Mammary epithelial cell (primary cell): ENCODE measurements at regions of chr4 and their contacts with region 1.

Region 1: DNA sequence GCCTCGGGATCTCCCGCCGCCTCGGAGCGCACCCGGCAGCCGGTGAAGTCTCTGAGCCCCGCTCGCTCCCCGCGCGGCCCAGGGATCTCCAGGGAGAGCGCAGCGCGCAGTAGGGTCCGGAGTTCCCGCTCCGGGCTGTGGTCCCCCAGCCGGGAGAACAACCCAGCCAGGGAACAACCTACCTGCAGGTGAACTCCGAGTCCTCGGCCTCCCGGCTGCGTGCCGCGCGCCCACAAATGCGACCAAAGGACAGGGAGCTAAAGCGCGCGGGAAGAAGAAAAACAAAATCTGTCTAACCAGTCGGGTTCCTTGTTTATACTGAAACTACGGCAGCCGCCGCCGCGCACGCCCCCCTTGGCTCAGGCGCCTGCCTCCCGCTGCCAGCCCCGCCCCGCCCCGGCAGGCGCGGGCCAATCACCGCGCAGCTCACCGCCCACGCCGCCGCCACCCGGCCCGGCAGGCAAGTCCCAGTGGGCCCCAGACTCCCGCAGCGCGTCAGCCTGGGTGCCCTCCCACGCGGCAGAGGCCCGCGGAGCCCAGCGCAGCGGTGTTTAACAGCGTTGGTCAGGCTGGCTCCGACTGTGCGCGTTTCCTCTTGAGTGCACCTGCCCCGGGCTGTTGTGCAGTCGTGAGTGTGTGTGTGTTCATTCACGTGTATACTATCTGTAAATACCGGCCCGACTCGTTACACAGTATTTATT is at the start of gene RASGEF1B:
- DNase-seq: peak; percentile 88
- H3K4me3 ChIP-seq: peak within 1 kb of the TSS; percentile 61 to 85 (median 68)
- H3K27ac ChIP-seq: peak within 1 kb of the TSS; percentile 30
- H3K4me1 ChIP-seq: peaks cover 23% of the 10 kb centered on the region
- H3K27me3 ChIP-seq: no peaks in the 10 kb centered on the region
- CTCF ChIP-seq: peak in 1 of 2 donors; percentile 1
- total RNA-seq, gene RASGEF1B: 10.6 to 15.3 TPM

Region 2: GRCh38 chr4:81180916-81181315 is 290.8 kb before region 1 on chr4:
- CTCF ChIA-PET with region 1: no interaction called
- dilution Hi-C with region 1: no loop called
- in situ Hi-C with region 1: no loop called
- intact Hi-C with region 1: no loop called
- DNase-seq: peak; percentile 61
- H3K4me3 ChIP-seq: no peak overlapping the region
- H3K27ac ChIP-seq: no peak overlapping the region
- H3K4me1 ChIP-seq: no peaks in the 10 kb centered on the region
- H3K27me3 ChIP-seq: no peaks in the 10 kb centered on the region
- CTCF ChIP-seq: no peak

Region 3: GRCh38 chr4:81447566-81448229 is 24.0 kb before region 1 on chr4:
- CTCF ChIA-PET with region 1: no interaction called
- dilution Hi-C with region 1: no loop called
- in situ Hi-C with region 1: no loop called
- intact Hi-C with region 1: no loop called
- DNase-seq: no peak
- H3K4me3 ChIP-seq: no peak overlapping the region
- H3K27ac ChIP-seq: no peak overlapping the region
- H3K4me1 ChIP-seq: peaks cover 6% of the 10 kb centered on the region
- H3K27me3 ChIP-seq: no peaks in the 10 kb centered on the region
- CTCF ChIP-seq: no peak

Region 4: GRCh38 chr4:81688085-81688484 is 216.3 kb after region 1 on chr4:
- CTCF ChIA-PET with region 1: interaction called, 7 read pairs
- dilution Hi-C with region 1: no loop called
- in situ Hi-C with region 1: no loop called
- intact Hi-C with region 1: loop called (anchors 1 kb)
- DNase-seq: peak; percentile 6
- H3K4me3 ChIP-seq: no peak overlapping the region
- H3K27ac ChIP-seq: no peak overlapping the region
- H3K4me1 ChIP-seq: no peaks in the 10 kb centered on the region
- H3K27me3 ChIP-seq: no peaks in the 10 kb centered on the region
- CTCF ChIP-seq: peak in 1 of 2 donors; percentile 42

Region 5: GRCh38 chr4:81839347-81840042 is 367.8 kb after region 1 on chr4:
- CTCF ChIA-PET with region 1: interaction called, 11 read pairs
- dilution Hi-C with region 1: no loop called
- in situ Hi-C with region 1: loop called (anchors 10 kb)
- intact Hi-C with region 1: loop called (anchors 1 kb)
- DNase-seq: peak; percentile 66
- H3K4me3 ChIP-seq: no peak overlapping the region
- H3K27ac ChIP-seq: no peak overlapping the region
- H3K4me1 ChIP-seq: no peaks in the 10 kb centered on the region
- H3K27me3 ChIP-seq: no peaks in the 10 kb centered on the region
- CTCF ChIP-seq: no peak

Region 6: DNA sequence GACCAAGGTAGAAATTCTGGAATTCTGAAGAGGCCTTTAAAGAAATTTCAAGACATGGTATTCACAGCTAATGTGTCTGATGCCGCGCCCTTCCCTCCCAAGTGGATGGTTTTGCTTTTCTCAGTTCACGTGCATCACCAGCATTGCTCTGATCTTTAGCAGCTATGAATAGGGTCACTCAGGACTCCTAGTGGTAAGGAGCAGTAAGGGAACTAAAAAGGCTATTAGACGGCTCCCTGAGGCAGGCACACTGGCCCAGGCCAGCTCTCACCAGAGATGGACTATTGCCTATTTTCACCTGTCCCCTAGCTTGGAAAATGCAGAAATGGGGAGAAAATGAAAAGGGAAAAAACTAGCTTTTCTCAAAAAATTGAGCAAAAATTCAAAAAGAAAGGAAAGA is 447.5 kb after region 1 on chr4:
- CTCF ChIA-PET with region 1: no interaction called
- dilution Hi-C with region 1: no loop called
- in situ Hi-C with region 1: no loop called
- intact Hi-C with region 1: loop called (anchors 5 kb)
- DNase-seq: peak; percentile 27
- H3K4me3 ChIP-seq: no peak overlapping the region
- H3K27ac ChIP-seq: no peak overlapping the region
- H3K4me1 ChIP-seq: no peaks in the 10 kb centered on the region
- H3K27me3 ChIP-seq: no peaks in the 10 kb centered on the region
- CTCF ChIP-seq: peak; percentile 32 to 47

Region 7: DNA sequence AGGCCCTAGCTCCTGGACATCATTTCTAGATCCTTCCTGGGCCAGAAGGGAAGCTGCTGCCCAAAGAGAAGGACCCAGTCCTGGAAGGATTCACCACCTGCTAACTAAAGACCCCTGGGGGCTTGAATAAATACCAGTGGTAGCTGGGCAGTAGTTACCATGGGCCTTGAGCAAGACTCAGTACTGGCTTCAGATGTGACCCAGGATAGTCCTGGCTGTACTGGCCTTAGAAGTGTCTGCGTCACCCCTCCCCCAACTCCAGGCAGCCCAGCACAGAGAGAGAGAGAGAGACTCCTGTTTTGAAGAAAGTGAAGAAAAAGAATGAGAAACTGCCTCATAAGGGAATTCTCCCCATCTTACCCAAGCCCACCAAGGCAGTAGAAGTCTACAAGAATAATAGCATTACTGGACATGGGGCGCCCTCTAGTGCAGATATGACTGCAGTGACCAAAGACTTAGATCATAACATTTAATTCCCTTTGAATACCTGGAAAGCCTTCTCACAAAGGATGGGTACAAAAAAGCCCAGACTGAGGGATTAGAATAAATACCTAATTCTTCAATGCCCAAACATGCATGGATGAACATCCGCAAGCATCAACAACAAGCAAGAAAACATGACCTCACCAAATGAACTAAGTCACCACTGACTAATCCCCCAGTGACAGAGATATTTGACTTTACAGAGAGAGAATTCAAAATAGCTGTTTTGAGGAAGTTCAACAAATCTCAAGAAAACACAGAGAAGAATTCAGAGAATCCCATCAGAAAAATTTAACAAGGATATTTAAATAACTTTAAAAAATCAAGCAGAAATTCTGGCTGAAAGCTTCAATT is 730.3 kb after region 1 on chr4:
- CTCF ChIA-PET with region 1: no interaction called
- dilution Hi-C with region 1: no loop called
- in situ Hi-C with region 1: loop called in 1 of 2 experiments (anchors 5 kb)
- intact Hi-C with region 1: loop called (anchors 1 kb)
- DNase-seq: peak; percentile 29
- H3K4me3 ChIP-seq: no peak overlapping the region
- H3K27ac ChIP-seq: no peak overlapping the region
- H3K4me1 ChIP-seq: peaks cover 11% of the 10 kb centered on the region
- H3K27me3 ChIP-seq: no peaks in the 10 kb centered on the region
- CTCF ChIP-seq: peak; percentile 70 to 81